ENCODE measurements at regions of chr6 and their contacts with region 1.

Region 1: GRCh38 chr6:148144917-148145521 is 197.6 kb upstream of the SASH1 start:
- DNase-seq: peak; percentile 34
- H3K4me3 ChIP-seq: peak overlapping the region in 1 of 3 experiments; percentile 25
- H3K27ac ChIP-seq: no peak overlapping the region
- H3K4me1 ChIP-seq: peaks cover 9% of the 10 kb centered on the region
- H3K27me3 ChIP-seq: no peaks in the 10 kb centered on the region
- CTCF ChIP-seq: peak; percentile 88 to 89

Region 2: DNA sequence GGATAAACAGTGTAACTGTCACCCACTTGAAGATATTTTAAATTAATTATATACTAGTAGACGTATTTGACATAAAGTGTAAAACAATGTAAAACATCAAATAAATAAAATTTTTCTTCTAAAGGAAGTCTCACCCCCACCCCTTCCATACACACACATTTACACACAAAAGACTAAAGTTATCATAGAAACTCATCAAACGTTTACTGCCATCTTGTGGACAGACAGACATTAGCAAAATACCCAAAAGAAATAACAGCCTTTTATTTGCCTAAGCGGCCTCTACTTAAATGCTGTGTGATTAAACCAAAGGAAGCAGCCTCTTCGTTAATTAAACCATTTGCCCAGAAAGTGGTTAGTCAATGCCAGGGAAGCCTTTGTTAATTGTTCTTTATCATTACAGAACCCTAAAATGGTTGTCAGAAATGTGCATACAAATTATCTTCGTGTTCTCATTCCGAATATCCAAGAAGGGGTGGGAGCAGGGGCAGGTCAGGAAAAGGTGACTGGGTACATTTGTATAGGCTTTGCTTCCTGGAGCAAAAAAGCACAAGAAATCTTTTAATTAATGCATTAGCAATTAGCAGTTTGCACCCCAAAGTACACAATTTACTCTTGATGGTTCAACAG is 21.4 kb after region 1 on chr6:
- CTCF ChIA-PET with region 1: no interaction called
- dilution Hi-C with region 1: no loop called
- in situ Hi-C with region 1: no loop called
- intact Hi-C with region 1: loop called (anchors 1 kb)
- DNase-seq: peak; percentile 39
- H3K4me3 ChIP-seq: no peak overlapping the region
- H3K27ac ChIP-seq: no peak overlapping the region
- H3K4me1 ChIP-seq: no peaks in the 10 kb centered on the region
- H3K27me3 ChIP-seq: no peaks in the 10 kb centered on the region
- CTCF ChIP-seq: peak; percentile 56 to 66

Region 3: GRCh38 chr6:148250975-148251685 is 106.1 kb after region 1 on chr6:
- CTCF ChIA-PET with region 1: interaction called, 18 read pairs
- dilution Hi-C with region 1: no loop called
- in situ Hi-C with region 1: no loop called
- intact Hi-C with region 1: no loop called
- DNase-seq: peak; percentile 52
- H3K4me3 ChIP-seq: no peak overlapping the region
- H3K27ac ChIP-seq: no peak overlapping the region
- H3K4me1 ChIP-seq: no peaks in the 10 kb centered on the region
- H3K27me3 ChIP-seq: no peaks in the 10 kb centered on the region
- CTCF ChIP-seq: peak; percentile 47 to 74

Measured in mammary epithelial cell (primary cell).